CD4-positive, alpha-beta memory T cell (primary cell): ENCODE measurements at regions of chr1 and their contacts with region 1.

Region 1: GRCh38 chr1:41673378-41673777 is 188.9 kb upstream of the EDN2 start:
- DNase-seq: peak; percentile 63 to 78 (median 67)
- H3K4me3 ChIP-seq: peak overlapping the region in 1 of 2 donors; percentile 17
- H3K4me3 Mint-ChIP-seq: peak overlapping the region; percentile 68 to 86 (median 76)
- H3K27ac ChIP-seq: peak overlapping the region; percentile 57
- H3K27ac Mint-ChIP-seq: peak overlapping the region; percentile 76 to 97 (median 89)
- H3K4me1 ChIP-seq: peaks cover 79% of the 10 kb centered on the region
- H3K4me1 Mint-ChIP-seq: peaks cover 68 to 93% (median 78%) of the 10 kb centered on the region in 4 donors
- H3K27me3 ChIP-seq: no peaks in the 10 kb centered on the region
- H3K27me3 Mint-ChIP-seq: no peaks in the 10 kb centered on the region

Region 2: DNA sequence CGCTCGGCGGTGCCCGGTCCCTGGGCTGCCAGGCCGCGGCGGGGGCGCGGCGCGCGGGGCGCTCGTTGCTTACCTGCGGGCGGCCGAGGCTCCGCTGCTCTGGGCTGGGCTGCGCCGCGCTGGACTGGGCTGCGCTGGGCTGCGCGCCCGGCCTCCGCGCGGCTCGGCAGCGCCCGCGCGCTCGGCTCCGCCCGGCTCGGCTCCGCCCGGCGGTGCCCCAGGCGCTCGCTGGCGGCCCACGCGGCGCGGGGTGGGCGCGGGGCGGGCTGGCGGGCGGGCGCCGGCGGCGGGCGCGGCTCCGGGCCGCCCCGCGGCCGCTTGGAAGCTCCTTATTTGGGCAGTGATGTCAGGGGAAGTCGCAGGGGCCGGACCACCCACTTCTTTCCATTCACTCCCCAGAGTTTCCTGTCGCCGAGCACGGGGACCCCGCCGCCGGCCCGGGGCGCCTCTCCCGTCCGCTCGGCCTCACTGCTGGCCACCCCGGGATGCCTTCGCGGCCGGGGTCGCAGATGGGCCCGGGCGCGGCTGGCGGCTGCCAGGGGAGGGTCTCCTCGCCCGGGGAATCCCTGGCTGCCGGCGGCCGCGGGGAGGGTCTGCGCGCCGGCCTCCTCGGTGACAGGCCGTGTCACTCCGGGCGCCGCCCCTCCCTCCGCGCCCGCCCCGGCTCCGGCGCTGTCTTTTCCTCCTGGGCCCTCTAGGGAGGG is 11.2 kb before region 1 on chr1:
- CTCF ChIA-PET with region 1: interaction called, 12 read pairs
- POLR2A ChIA-PET with region 1: interaction called, 60 read pairs
- intact Hi-C with region 1: no loop called
- DNase-seq: peak; percentile 68 to 81 (median 76)
- H3K4me3 ChIP-seq: peak overlapping the region in 1 of 2 donors; percentile 64
- H3K4me3 Mint-ChIP-seq: peak overlapping the region in 3 of 8 donors; percentile 68 to 93 (median 79)
- H3K27ac ChIP-seq: peak overlapping the region; percentile 67
- H3K27ac Mint-ChIP-seq: peak overlapping the region in 6 of 7 donors; percentile 48 to 84 (median 55)
- H3K4me1 ChIP-seq: peaks cover 82% of the 10 kb centered on the region
- H3K4me1 Mint-ChIP-seq: peaks cover 58 to 89% (median 75%) of the 10 kb centered on the region in 4 donors
- H3K27me3 ChIP-seq: no peaks in the 10 kb centered on the region
- H3K27me3 Mint-ChIP-seq: no peaks in the 10 kb centered on the region

Region 3: DNA sequence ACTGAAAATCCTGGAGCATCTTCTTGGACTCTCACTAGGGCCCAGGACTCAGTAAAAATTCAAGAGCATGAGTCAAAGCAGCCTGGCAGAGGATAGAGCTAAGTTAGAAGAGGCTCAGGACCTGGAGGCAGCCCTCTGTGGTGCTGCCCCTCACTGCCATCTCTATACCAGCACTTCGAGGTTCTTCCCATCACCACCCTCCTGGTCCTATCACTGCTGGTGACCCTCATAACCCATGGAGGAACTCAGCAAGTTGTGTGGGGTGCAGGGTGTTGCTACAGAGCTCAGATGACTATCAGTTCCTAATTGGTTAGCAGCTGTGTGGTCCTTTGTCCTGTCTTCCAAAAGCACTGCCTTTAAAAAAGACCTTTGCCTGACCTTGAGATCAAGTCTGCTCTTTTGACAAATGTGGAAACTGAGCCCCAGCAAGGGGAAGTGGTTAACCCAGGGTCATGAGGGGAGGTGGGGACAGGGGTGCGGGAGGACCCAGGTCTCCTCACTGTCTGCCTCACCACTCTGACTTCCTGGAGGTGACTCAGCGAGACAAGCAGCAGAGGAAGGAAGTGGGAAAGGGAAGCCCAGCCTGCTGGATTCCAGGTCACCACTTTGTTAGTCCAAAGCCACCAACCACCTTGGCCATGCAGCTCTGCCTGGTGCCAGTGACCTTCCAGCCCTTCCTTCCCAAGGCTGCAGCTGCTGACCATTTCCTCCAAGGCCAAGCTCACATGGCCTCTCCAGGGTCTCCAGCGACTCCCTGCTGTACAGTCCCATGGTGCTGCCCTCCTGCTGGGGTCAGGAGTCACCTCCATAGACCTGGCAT is 10.5 kb after region 1 on chr1:
- CTCF ChIA-PET with region 1: interaction called, 4 read pairs
- POLR2A ChIA-PET with region 1: interaction called, 32 read pairs
- intact Hi-C with region 1: no loop called
- DNase-seq: no peak
- H3K4me3 ChIP-seq: no peak overlapping the region
- H3K4me3 Mint-ChIP-seq: peak overlapping the region in 7 of 8 donors; percentile 37 to 83 (median 69)
- H3K27ac ChIP-seq: no peak overlapping the region
- H3K27ac Mint-ChIP-seq: peak overlapping the region; percentile 20 to 82 (median 57)
- H3K4me1 ChIP-seq: peaks cover 56% of the 10 kb centered on the region
- H3K4me1 Mint-ChIP-seq: peaks cover 52 to 91% (median 68%) of the 10 kb centered on the region in 4 donors
- H3K27me3 ChIP-seq: no peaks in the 10 kb centered on the region
- H3K27me3 Mint-ChIP-seq: no peaks in the 10 kb centered on the region

Region 4: GRCh38 chr1:41802532-41803501 is 129.4 kb after region 1 on chr1:
- CTCF ChIA-PET with region 1: interaction called, 6 read pairs
- POLR2A ChIA-PET with region 1: interaction called, 11 read pairs
- intact Hi-C with region 1: no loop called
- DNase-seq: peak; percentile 51 to 64 (median 59)
- H3K4me3 ChIP-seq: peak overlapping the region in 1 of 2 donors; percentile 35
- H3K4me3 Mint-ChIP-seq: peak overlapping the region; percentile 12 to 79 (median 72)
- H3K27ac ChIP-seq: peak overlapping the region; percentile 55
- H3K27ac Mint-ChIP-seq: peak overlapping the region; percentile 75 to 97 (median 93)
- H3K4me1 ChIP-seq: peaks cover 87% of the 10 kb centered on the region
- H3K4me1 Mint-ChIP-seq: peaks cover 72 to 93% (median 82%) of the 10 kb centered on the region in 4 donors
- H3K27me3 ChIP-seq: no peaks in the 10 kb centered on the region
- H3K27me3 Mint-ChIP-seq: no peaks in the 10 kb centered on the region

Region 5: DNA sequence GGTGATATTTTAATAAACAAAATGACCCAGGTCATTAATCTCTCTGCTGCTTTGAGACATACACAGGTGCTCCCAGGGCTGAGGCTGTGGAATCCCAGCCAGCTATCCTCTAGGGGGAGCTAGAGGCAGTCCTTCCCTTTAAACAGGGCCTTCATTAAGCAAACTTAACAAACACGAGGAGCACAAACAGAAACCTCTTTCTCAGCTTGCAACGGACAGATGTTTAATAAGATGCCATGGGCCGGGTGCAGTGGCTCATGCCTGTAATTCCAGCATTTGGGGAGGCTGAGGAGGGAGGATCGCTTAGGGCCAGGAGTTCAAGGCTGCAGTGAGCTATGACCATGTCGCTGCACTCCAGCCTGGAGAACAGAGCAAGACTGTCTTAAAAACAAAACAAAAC is 138.7 kb after region 1 on chr1:
- CTCF ChIA-PET with region 1: interaction called, 3 read pairs
- POLR2A ChIA-PET with region 1: no interaction called
- intact Hi-C with region 1: loop called (anchors 5 kb)
- DNase-seq: peak; percentile 49 to 64 (median 60)
- H3K4me3 ChIP-seq: no peak overlapping the region
- H3K4me3 Mint-ChIP-seq: peak overlapping the region in 6 of 8 donors; percentile 12 to 51 (median 39)
- H3K27ac ChIP-seq: no peak overlapping the region
- H3K27ac Mint-ChIP-seq: peak overlapping the region in 4 of 7 donors; percentile 5 to 32 (median 20)
- H3K4me1 ChIP-seq: peaks cover 25% of the 10 kb centered on the region
- H3K4me1 Mint-ChIP-seq: peaks cover 27 to 51% (median 30%) of the 10 kb centered on the region in 4 donors
- H3K27me3 ChIP-seq: no peaks in the 10 kb centered on the region
- H3K27me3 Mint-ChIP-seq: no peaks in the 10 kb centered on the region